Posterior vena cava (tissue), 2 donors: ENCODE measurements at regions of chr19 and their contacts with region 1.

Region 1: DNA sequence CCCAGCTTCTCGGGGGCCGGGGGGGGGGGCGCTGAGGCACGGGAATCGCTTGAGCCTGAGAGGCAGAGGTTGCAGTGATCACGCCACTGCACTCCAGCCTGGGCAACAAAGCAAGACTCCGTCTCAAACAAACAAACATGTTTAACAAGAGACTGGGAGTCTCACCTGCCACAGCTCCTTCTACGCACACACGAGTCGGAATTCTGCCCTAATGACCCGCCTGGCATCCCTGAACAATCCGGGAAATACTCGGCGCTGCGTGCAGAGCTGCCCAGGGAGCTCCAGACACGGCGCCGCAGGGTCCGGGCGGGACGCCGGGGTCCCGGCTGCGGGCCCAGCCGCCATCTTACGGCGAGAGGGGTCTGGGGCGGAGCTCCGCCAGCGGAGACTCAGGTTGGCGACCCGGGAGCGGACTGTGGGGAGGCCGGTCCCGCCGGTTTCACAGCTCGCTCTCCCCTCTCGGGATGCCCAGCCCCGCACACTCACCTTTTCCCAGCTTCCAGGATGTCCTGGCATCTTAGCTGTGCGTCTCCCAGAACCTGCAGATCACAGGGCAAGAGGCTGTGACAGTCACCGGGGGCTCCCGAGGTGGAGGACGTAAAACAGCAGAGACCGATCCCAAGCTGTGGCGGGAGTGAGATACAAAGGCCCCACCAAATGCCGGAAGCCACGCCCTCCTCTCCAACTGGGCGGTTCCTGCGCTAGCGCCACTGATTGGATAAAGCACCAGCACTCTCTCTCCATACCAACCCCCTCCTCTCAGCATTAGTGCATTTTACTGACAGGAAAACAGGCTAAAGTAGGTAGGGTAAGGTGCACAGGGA is 23.6 kb upstream of the ZNF724 start:
- DNase-seq: peak; percentile 95

Region 2: GRCh38 chr19:22622901-22623840 is 650.6 kb before region 1 on chr19:
- intact Hi-C with region 1: loop called in 1 of 2 experiments (anchors 10 kb)
- DNase-seq: peak; percentile 82

Region 3: GRCh38 chr19:23286477-23286876 is 12.7 kb after region 1 on chr19:
- intact Hi-C with region 1: no loop called
- DNase-seq: no peak